Left cardiac atrium (tissue), 4 donors: ENCODE measurements at regions of chr10 and their contacts with region 1.

Region 1: GRCh38 chr10:34677591-34677990 is 137.5 kb downstream of the PARD3 start:
- DNase-seq: no peak
- ATAC-seq: no peak

Region 2: GRCh38 chr10:34954168-34954567 is 276.6 kb after region 1 on chr10:
- intact Hi-C with region 1: loop called in 1 of 2 experiments (anchors 10 kb)
- DNase-seq: no peak
- ATAC-seq: no peak

Region 3: GRCh38 chr10:35470260-35470918 is 792.8 kb after region 1 on chr10:
- intact Hi-C with region 1: no loop called
- DNase-seq: no peak
- ATAC-seq: peak; percentile 79 to 81